Sciatic nerve (tissue), 2 donors: ENCODE measurements at regions of chr1 and their contacts with region 1.

Region 1: DNA sequence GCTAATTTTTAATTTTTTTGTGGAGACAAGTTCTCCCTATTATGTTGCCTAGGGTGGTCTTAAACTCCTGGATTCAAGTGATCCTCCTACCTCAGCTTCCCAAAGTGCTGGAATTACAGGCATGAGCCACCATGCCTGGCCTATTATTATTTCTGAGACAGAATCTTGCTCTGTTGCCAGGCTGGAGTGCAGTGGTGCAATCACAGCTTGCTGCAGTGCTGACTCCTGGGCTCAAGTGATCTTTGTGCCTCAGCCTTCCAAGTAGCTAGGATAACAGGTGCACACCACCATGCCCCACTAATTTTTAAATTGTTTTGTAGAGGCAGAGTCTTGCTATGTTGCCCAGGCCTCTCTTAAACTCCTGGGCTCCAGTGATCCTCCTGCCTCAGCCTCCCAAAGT is 196.3 kb downstream of the CAMTA1 start:
- DNase-seq: no peak
- ATAC-seq: no peak

Region 2: GRCh38 chr1:6911974-6912373 is 69.6 kb before region 1 on chr1:
- intact Hi-C with region 1: no loop called
- DNase-seq: peak; percentile 31
- ATAC-seq: peak; percentile 89

Region 3: GRCh38 chr1:7026169-7026568 is 44.6 kb after region 1 on chr1:
- intact Hi-C with region 1: loop called (anchors 1 kb)
- DNase-seq: no peak
- ATAC-seq: no peak

Region 4: DNA sequence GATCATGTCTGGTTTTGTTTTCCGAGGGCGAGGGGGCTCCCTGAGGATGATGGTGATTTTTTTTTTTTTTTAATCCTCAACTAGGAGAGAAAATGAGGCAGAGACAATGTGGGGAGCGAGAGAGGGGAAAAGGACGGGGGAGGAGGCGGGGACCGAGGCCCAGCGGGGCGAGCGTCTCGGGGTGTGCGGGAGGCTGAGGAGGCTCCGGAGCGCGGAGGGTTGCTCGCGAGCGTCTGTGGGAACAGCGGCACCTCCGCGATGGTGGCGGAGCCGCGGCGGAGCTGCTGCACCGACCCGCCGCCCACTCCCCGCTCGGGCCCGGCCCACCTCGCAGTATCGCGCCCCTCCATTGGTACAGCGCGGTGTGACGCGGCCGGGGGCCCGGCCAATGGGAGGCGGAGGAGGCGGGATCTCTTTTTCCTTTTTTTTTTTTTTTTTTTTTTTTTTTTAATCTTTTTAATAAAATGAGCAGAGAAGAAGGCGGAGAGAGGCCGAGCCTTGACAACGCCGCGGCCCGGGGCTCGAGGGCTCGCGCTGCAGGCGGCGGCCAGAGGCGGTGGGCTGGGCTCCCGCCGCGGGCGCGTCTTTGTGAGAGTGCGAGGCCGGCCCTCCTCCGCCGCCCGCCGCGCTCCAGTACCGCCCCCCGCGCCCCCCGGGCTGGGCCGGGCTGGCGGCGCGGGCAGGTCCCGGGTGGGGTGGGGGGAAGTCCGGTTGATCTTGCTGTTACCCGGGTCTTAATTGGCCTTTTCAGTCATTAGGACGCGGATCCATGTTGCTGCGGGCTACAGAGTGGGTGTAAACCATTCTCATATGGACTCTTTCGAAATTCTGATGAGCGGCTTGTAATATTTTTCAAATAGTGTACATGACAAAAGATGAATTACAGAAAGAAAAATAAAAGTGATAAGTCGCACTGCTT is 1836.1 kb after region 1 on chr1 and contains the start of gene RERE:
- intact Hi-C with region 1: no loop called
- DNase-seq: peak; percentile 97
- ATAC-seq: peak; percentile 99
- total RNA-seq, gene RERE: 134 TPM